Transverse colon (tissue), 4 donors: ENCODE measurements at regions of chr11 and their contacts with region 1.

Region 1: DNA sequence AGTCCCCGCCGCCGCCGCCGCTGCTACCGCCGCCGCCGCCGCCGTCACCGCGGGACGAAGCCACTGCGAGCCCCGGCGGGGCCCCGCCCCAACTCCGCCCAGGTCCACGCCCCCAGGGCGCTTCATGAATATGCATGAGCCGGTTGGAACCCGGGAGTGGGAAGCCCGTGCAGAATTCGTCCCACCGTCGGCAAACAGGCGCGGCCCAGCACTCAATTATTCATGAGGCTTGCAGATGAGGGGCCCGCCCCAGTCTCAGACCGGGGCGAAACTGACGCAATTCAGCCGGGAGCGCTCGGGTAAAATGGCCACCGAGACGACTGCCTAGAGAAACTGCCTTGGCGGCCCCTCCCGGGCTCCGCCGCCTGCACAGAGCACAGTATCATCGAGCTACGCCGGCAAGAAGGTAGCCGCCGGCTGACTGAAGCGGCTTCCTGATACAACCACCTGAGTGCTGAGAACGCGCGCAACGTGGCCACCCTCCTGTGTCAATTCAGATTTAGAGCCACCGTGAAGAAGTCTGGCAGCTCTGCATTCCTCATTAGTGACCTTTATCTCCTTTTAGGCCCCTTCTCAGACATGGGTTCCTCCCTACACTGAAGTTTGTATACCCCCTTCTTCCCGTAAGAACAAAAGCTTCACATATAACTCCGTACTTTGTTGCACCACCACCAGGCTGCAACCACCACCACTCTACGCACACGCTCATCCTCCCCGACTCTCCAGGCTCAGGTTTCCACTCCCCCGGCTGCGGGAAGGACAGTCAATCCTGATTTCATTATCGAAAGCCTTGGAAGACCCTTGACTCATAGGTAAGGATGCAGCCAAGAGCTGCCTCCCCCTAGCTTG is at the start of gene TNKS1BP1:
- DNase-seq: peak; percentile 99
- H3K4me3 ChIP-seq: peak within 1 kb of the TSS; percentile 81 to 97 (median 86)
- H3K27ac ChIP-seq: peak within 1 kb of the TSS; percentile 92 to 98 (median 96)
- H3K4me1 ChIP-seq: peaks cover 20 to 56% (median 49%) of the 10 kb centered on the region in 4 donors
- H3K27me3 ChIP-seq: no peaks in the 10 kb centered on the region
- CTCF ChIP-seq: peak in 2 of 5 experiments; percentile 34 to 35
- EP300 ChIP-seq: no peak
- POLR2A ChIP-seq: peak; percentile 90
- total RNA-seq, gene TNKS1BP1: 74.3 to 122 (median 119) TPM

Region 2: GRCh38 chr11:57249384-57250319 is 75.5 kb before region 1 on chr11:
- in situ Hi-C with region 1: no loop called
- intact Hi-C with region 1: no loop called
- DNase-seq: peak; percentile 75
- H3K4me3 ChIP-seq: no peak overlapping the region
- H3K27ac ChIP-seq: peak overlapping the region in 3 of 4 donors; percentile 22 to 46 (median 26)
- H3K4me1 ChIP-seq: peaks cover 2 to 5% (median 4%) of the 10 kb centered on the region in 4 donors
- H3K27me3 ChIP-seq: no peaks in the 10 kb centered on the region
- CTCF ChIP-seq: peak; percentile 80 to 86 (median 82)
- EP300 ChIP-seq: no peak
- POLR2A ChIP-seq: no peak

Region 3: DNA sequence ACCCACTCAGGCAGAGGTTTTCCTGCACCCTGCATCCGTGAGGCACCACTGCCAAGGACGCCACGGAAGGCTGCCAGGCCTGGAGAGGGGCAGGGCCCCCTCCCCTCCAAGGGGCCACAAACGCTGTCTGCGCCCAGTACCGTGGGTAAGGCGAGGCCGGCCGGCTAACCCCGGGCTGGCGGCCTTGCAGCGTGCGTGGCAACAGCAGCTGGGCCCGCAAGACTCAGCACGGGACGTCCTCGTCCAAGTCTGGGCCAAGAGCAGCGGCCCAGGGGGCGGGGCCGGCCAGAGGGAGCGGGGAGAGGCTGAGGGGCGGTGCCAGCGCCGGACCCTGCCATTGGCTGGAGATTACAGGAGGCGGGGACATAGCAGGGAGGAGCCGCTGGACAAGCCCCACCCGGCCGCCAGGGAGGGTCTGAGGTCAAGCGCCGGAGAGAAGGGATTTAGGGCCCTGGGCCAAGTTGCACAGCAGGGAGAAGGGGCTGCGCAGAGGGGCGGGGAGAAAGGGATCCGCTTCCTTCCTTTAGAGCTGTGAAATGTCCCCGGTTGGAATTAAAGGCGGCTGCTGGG is 174.4 kb after region 1 on chr11:
- in situ Hi-C with region 1: loop called in 2 of 4 experiments (anchors 25 kb)
- intact Hi-C with region 1: no loop called
- DNase-seq: peak; percentile 95
- H3K4me3 ChIP-seq: peak overlapping the region in 3 of 4 donors; percentile 6 to 41 (median 8)
- H3K27ac ChIP-seq: peak overlapping the region; percentile 63 to 85 (median 73)
- H3K4me1 ChIP-seq: peaks cover 6 to 17% (median 13%) of the 10 kb centered on the region in 4 donors
- H3K27me3 ChIP-seq: no peaks in the 10 kb centered on the region
- CTCF ChIP-seq: peak in 2 of 5 experiments; percentile 16 to 23
- EP300 ChIP-seq: no peak
- POLR2A ChIP-seq: peak; percentile 26

Region 4: GRCh38 chr11:57667736-57668435 is 342.8 kb after region 1 on chr11 and contains the start of gene ZDHHC5:
- in situ Hi-C with region 1: no loop called
- intact Hi-C with region 1: loop called (anchors 10 kb)
- DNase-seq: peak; percentile 99
- H3K4me3 ChIP-seq: peak within 1 kb of the TSS; percentile 67 to 96 (median 83)
- H3K27ac ChIP-seq: peak within 1 kb of the TSS; percentile 94 to 99 (median 98)
- H3K4me1 ChIP-seq: peaks cover 11 to 25% (median 22%) of the 10 kb centered on the region in 4 donors
- H3K27me3 ChIP-seq: no peaks in the 10 kb centered on the region
- CTCF ChIP-seq: peak in 4 of 5 experiments; percentile 28 to 63 (median 48)
- EP300 ChIP-seq: no peak
- POLR2A ChIP-seq: peak; percentile 87
- total RNA-seq, gene ZDHHC5: 38.4 to 63.2 (median 57.6) TPM